ENCODE measurements at regions of chr3 and their contacts with region 1.

Region 1: GRCh38 chr3:207973-208372 is 11.4 kb downstream of the CHL1 start:
- DNase-seq: no peak

Region 2: GRCh38 chr3:331881-332280 is 123.9 kb after region 1 on chr3:
- intact Hi-C with region 1: loop called (anchors 10 kb)
- DNase-seq: no peak

Region 3: GRCh38 chr3:468172-468571 is 260.2 kb after region 1 on chr3:
- intact Hi-C with region 1: no loop called
- DNase-seq: no peak

Measured in posterior cingulate gyrus (tissue), 11 donors.